HCT116 (cell line): ENCODE measurements at regions of chr9 and their contacts with region 1.

Region 1: DNA sequence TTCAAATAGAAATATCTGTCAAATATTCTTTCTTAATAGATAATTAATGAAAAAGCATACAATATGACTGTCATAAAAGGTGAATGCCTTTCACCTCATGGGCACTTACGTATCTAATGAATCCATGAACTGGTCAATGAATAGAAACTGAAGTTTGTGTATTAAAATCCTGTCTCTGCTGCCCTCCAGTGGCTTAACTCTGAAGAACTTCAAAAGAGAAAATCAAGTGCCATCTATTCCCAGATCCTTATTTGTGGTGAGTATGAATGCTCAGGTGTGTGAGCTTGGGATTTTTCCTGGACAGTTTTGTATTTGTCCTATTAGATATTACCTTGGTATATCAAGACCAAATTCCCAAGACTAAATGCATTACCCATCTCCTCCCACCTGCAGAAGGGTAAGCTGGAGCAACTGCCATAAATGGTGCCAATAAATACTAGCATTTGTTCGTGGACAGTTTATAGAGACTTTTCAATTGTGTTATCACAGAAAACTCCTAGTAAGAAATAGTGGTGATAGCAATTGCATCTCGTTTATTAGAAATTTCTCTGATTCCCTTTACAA is 44.0 kb upstream of the SVEP1 start:
- DNase-seq: peak; percentile 66
- ATAC-seq: peak; percentile 81
- H3K4me3 ChIP-seq: no peak overlapping the region
- H3K27ac ChIP-seq: no peak overlapping the region
- H3K4me1 ChIP-seq: no peaks in the 10 kb centered on the region
- H3K27me3 ChIP-seq: no peaks in the 10 kb centered on the region
- CTCF ChIP-seq: peak; percentile 45 to 83 (median 69); a peak in 5 of 6 replicates
- POLR2A ChIP-seq: no peak
- RAD21 ChIP-seq: peak; percentile 87

Region 2: GRCh38 chr9:110183208-110184145 is 440.1 kb before region 1 on chr9:
- CTCF ChIA-PET with region 1: interaction called, 34 read pairs
- POLR2A ChIA-PET with region 1: interaction called, 3 read pairs
- RAD21 ChIA-PET with region 1: interaction called, 6 to 10 read pairs
- intact Hi-C with region 1: loop called (anchors 1 kb)
- DNase-seq: peak; percentile 68
- ATAC-seq: peak; percentile 89
- H3K4me3 ChIP-seq: no peak overlapping the region
- H3K27ac ChIP-seq: no peak overlapping the region
- H3K4me1 ChIP-seq: peaks cover 0 to 26% of the 10 kb centered on the region in 2 experiments; a peak in 2 of 4 replicates
- H3K27me3 ChIP-seq: no peaks in the 10 kb centered on the region
- CTCF ChIP-seq: peak; percentile 74 to 84 (median 81)
- POLR2A ChIP-seq: no peak
- RAD21 ChIP-seq: peak; percentile 94

Region 3: DNA sequence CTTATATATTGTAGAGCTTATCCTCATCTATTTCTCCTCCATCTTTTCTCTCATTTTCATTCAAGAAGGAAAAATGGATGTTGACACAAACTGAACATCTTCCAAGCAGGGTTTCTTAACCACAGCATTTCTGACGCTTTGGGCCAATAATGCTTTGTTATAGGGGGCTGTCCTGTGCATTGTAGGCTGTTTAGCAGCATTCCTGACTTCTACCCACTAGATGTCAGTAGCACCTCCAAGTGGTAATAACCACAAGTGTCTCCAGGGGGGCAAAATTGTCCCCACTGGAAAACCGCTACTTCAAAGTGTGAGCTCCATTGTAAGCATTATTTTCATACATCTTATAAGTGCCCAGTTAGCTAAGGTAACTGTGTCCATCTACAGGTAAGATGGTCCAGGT is 283.2 kb before region 1 on chr9:
- CTCF ChIA-PET with region 1: interaction called, 12 read pairs
- POLR2A ChIA-PET with region 1: no interaction called
- RAD21 ChIA-PET with region 1: no interaction called
- intact Hi-C with region 1: loop called (anchors 1 kb)
- DNase-seq: peak; percentile 24
- ATAC-seq: peak; percentile 90
- H3K4me3 ChIP-seq: no peak overlapping the region
- H3K27ac ChIP-seq: no peak overlapping the region
- H3K4me1 ChIP-seq: no peaks in the 10 kb centered on the region
- H3K27me3 ChIP-seq: no peaks in the 10 kb centered on the region
- CTCF ChIP-seq: peak; percentile 49 to 66 (median 60); a peak in 5 of 6 replicates
- POLR2A ChIP-seq: no peak
- RAD21 ChIP-seq: peak; percentile 68

Region 4: DNA sequence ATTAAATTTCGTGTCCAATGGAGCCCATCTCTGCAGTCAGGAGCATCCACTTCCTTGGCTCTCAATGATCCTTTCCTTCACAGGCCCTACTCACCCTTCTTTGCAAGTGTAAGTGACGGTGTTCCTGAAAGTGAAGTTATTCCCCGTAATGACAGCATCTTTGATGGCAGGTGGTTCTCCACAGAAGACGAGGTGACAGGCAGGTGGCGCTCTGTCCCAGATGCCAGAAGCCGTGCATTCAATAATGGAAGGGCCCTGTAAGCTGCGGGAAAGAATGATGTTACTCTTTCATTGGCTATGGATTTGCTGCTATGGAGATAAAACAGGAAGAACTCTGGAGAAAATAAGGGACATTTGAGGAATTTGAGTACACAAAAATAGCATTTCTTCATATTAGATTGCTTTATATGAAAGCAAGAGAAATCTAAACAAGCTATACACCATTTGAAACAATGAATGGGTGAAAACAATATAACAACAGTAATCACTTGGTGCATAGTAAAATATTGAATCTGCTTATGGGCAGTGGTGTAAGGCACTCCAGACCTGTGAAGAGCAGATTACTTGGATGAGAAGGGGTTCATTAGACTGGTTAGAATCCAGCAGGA is 195.9 kb before region 1 on chr9:
- CTCF ChIA-PET with region 1: interaction called, 27 read pairs
- POLR2A ChIA-PET with region 1: no interaction called
- RAD21 ChIA-PET with region 1: interaction called, 6 to 7 read pairs
- intact Hi-C with region 1: loop called (anchors 2 kb)
- DNase-seq: peak; percentile 42
- ATAC-seq: peak; percentile 96
- H3K4me3 ChIP-seq: no peak overlapping the region
- H3K27ac ChIP-seq: no peak overlapping the region
- H3K4me1 ChIP-seq: no peaks in the 10 kb centered on the region
- H3K27me3 ChIP-seq: no peaks in the 10 kb centered on the region
- CTCF ChIP-seq: peak; percentile 54 to 83 (median 71); a peak in 5 of 6 replicates
- POLR2A ChIP-seq: no peak
- RAD21 ChIP-seq: peak; percentile 67

Region 5: DNA sequence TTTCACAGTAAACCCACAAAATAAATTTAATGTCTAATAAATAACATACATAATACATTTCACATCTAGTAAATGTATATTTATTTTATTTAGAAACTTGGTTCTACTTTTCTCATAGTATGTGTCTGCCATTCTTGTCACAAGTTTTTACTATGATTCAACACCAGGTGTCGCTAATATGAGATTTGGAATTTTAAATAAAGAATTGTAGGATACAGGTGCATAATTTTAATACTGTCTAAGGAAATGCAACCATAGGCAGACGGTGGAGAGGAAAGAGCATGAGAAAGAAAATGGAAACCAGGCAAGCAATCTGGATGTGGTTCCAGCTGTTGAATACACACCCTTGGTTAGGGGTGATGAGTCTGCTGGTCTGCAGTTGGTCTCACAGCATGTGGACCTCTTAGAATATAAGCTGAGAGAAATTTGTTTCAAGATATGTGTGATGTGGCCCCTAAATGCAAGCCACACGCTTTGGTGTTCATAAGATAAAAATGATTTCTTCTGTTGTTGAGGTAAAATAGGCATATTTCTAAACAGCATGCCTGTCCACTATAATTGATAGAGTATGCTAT is 171.2 kb before region 1 on chr9:
- CTCF ChIA-PET with region 1: interaction called, 4 read pairs
- POLR2A ChIA-PET with region 1: no interaction called
- RAD21 ChIA-PET with region 1: no interaction called
- intact Hi-C with region 1: loop called (anchors 1 kb)
- DNase-seq: no peak
- ATAC-seq: peak; percentile 66; the same call in 1 of the 2 replicates
- H3K4me3 ChIP-seq: no peak overlapping the region
- H3K27ac ChIP-seq: no peak overlapping the region
- H3K4me1 ChIP-seq: no peaks in the 10 kb centered on the region
- H3K27me3 ChIP-seq: no peaks in the 10 kb centered on the region
- CTCF ChIP-seq: peak; percentile 34 to 57 (median 47); a peak in 3 of 6 replicates
- POLR2A ChIP-seq: no peak
- RAD21 ChIP-seq: peak; percentile 38

Region 6: GRCh38 chr9:111005746-111006470 is 382.4 kb after region 1 on chr9:
- CTCF ChIA-PET with region 1: no interaction called
- POLR2A ChIA-PET with region 1: no interaction called
- RAD21 ChIA-PET with region 1: no interaction called
- intact Hi-C with region 1: no loop called
- DNase-seq: no peak
- ATAC-seq: no peak
- H3K4me3 ChIP-seq: no peak overlapping the region
- H3K27ac ChIP-seq: no peak overlapping the region
- H3K4me1 ChIP-seq: no peaks in the 10 kb centered on the region
- H3K27me3 ChIP-seq: no peaks in the 10 kb centered on the region
- CTCF ChIP-seq: no peak
- POLR2A ChIP-seq: no peak
- RAD21 ChIP-seq: no peak

Region 7: DNA sequence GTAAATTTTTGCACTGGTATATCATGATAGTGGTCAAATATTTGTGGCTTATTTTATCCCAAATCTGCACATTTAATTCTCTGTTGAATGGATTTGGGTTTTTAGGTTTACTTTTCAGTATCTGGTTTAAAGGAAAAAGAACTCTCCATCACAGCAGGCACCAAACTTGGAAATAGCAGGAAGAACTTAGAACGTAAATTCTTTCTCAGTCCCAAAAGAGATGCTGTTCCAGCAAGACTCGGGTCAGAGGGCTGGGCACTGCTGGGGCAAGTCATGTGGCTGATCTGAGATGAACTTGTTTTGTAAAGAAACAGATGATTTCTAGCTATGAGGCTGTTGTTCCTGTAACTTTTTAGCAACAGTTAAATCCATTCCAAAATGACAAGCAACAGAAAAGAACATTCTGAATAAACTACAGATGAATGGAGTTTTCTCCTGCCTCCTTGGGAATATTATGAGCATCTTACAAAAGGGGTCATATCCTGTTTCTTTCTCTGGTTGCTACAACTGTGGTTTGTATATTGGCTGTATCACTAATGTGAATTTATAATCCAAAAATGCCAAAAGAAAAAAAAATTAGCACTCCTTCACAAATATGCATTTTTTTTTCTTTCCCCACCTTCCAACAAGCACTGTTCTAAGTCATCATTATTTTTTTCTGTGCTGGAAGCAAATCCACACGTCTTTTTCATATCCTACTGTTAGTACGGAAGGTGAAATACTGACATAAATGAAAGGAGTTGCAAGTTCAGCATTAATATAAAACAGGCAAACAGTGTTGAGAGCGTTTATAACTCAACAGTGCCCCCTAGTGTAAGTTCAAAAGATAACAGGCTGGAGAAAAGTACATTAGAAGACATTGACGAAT is 675.4 kb after region 1 on chr9:
- CTCF ChIA-PET with region 1: no interaction called
- POLR2A ChIA-PET with region 1: no interaction called
- RAD21 ChIA-PET with region 1: no interaction called
- intact Hi-C with region 1: loop called (anchors 5 kb)
- DNase-seq: peak; percentile 46
- ATAC-seq: peak; percentile 83
- H3K4me3 ChIP-seq: no peak overlapping the region
- H3K27ac ChIP-seq: no peak overlapping the region
- H3K4me1 ChIP-seq: 0 out of 4 replicates have a peak, but pooled peaks cover 0 to 3% of the 10 kb centered on the region in 2 experiments
- H3K27me3 ChIP-seq: no peaks in the 10 kb centered on the region
- CTCF ChIP-seq: peak; percentile 59 to 88 (median 82)
- POLR2A ChIP-seq: no peak
- RAD21 ChIP-seq: peak; percentile 97